A673 (cell line): ENCODE measurements at regions of chr22 and their contacts with region 1.

Region 1: DNA sequence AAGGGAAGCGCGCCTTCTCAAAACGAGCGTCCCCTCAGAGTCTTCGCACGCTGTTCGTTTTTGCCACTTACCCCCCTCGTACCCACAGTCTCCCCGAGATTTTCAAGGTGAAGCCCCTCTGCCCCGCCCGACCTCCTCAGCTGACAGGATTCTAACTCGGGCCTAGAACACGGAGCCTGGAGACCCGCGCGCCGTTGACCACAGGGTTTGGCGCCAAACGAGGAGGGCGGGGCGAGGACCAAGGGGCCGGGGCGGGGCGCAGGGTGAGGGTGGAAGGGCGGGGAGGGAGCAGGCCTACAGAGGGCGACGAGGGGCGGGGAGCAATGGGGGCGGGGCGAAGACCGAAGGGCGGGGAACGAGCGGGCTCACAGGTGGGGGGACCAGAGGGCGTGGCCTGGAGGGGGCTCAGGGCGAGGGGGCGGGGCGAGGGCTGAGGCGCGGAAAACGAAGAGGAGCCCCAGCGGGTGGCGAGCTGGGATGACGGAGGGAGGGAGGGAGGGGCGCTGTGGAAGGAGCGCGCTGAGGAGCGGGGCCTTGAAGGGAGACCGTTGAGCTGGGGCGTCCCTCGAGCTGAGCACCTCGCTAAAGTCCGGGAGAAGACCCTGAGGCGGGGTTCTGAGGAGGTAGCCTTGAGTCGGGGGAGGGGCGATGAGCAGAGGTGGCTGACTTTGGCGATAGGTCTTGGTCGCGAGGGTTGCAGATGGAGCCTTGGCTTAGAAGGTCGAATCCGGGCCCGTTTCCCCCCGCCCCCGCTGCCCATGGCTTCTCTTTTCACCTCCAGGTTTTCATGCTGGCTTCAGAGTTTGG is at the start of gene DMC1:
- DNase-seq: peak; percentile 95
- H3K4me3 ChIP-seq: peak within 1 kb of the TSS; percentile 49
- H3K27ac ChIP-seq: peak within 1 kb of the TSS; percentile 66
- H3K4me1 ChIP-seq: peaks cover 11% of the 10 kb centered on the region
- H3K27me3 ChIP-seq: no peaks in the 10 kb centered on the region
- CTCF ChIP-seq: no peak
- total RNA-seq, gene DMC1: 1.7 and 2.3 TPM in 2 replicates

Region 2: DNA sequence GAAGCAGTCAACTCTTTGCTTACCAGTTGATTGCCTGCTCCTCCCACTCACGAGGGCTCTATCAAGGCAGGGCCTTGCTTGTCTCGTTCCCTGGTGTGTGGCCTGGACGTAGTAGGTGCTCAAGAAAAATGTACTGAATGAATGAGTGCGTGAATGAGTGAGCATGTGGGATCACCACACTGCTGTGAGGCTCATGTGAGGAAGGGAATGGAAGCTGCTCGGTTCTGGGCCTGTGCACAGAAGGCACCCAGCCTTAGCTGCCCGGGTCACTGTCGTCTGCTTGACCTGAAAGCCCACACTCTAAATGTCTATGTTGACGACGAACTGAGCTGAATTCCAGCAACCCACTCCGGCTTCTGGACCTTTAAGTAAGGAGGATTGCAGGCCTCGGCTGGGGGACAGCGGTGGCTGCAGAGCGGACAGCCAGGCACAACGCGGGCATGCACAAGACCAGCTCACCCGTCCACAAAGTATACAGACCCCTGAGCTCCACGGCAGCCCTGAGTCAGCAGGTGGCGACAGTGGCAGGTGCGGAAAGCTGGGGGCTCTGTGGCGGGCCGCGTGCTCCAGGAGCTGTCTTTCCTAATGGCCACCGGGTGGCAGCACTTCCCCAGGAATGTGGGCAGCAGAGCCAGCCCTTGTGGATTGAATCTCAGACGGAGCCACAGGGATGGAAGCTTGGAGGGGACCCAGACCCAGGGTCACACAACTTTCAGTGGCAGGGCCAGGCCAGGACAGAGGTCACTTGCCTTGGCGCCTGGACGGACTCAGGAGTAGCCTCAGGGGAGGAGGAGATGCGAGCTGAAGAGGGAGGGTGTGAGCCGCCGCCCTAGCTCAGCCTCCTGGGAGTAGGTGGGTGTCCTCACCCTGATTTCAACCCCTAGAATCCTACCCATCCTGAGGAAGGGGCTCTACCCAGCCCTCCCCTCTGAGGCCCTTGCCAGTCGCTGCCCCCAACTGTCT is 518.0 kb before region 1 on chr22:
- CTCF ChIA-PET with region 1: interaction called, 13 read pairs
- POLR2A ChIA-PET with region 1: no interaction called
- intact Hi-C with region 1: loop called (anchors 5 kb)
- DNase-seq: peak; percentile 85
- H3K4me3 ChIP-seq: no peak overlapping the region
- H3K27ac ChIP-seq: no peak overlapping the region
- H3K4me1 ChIP-seq: no peaks in the 10 kb centered on the region
- H3K27me3 ChIP-seq: no peaks in the 10 kb centered on the region
- CTCF ChIP-seq: peak; percentile 96

Region 3: GRCh38 chr22:38652859-38653258 is 82.7 kb after region 1 on chr22:
- CTCF ChIA-PET with region 1: no interaction called
- POLR2A ChIA-PET with region 1: interaction called, 12 read pairs
- intact Hi-C with region 1: no loop called
- DNase-seq: no peak
- H3K4me3 ChIP-seq: no peak overlapping the region
- H3K27ac ChIP-seq: no peak overlapping the region
- H3K4me1 ChIP-seq: peaks cover 5% of the 10 kb centered on the region
- H3K27me3 ChIP-seq: no peaks in the 10 kb centered on the region
- CTCF ChIP-seq: no peak

Region 4: GRCh38 chr22:40541300-40541699 is 1971.1 kb after region 1 on chr22:
- CTCF ChIA-PET with region 1: no interaction called
- POLR2A ChIA-PET with region 1: no interaction called
- intact Hi-C with region 1: no loop called
- DNase-seq: no peak
- H3K4me3 ChIP-seq: no peak overlapping the region
- H3K27ac ChIP-seq: no peak overlapping the region
- H3K4me1 ChIP-seq: peaks cover 5% of the 10 kb centered on the region
- H3K27me3 ChIP-seq: no peaks in the 10 kb centered on the region
- CTCF ChIP-seq: no peak